T-cell (primary cell): ENCODE measurements at regions of chr3 and their contacts with region 1.

Region 1: DNA sequence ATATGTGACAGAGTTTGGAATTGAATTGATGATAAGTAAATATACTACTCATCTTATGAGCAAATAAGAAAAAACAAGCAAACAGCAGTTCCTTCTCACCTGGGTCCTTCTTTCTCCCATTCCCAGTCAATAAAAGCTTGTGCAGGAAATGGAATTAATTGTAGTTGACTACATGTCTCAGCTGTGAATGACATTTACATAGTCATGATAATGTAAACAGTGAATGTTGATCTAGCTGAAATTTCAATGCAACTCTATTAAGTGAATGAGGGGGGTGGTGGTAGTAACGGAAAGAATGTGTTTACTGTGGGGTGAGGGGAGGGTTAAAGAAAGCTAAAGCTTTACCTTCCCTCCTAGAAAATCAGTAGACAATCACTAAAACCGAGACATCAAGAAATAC is 76.3 kb downstream of the NFKBIZ start:
- DNase-seq: no peak
- ATAC-seq: no peak
- H3K4me3 ChIP-seq: no peak overlapping the region
- H3K4me3 Mint-ChIP-seq: peak overlapping the region in 1 of 3 donors; percentile 26
- H3K27ac ChIP-seq: no peak overlapping the region
- H3K27ac Mint-ChIP-seq: no peak overlapping the region
- H3K4me1 ChIP-seq: peaks cover 0 to 13% of the 10 kb centered on the region in 2 experiments
- H3K4me1 Mint-ChIP-seq: peaks cover 20 to 28% (median 23%) of the 10 kb centered on the region in 3 donors
- H3K27me3 ChIP-seq: no peaks in the 10 kb centered on the region
- H3K27me3 Mint-ChIP-seq: no peaks in the 10 kb centered on the region

Region 2: DNA sequence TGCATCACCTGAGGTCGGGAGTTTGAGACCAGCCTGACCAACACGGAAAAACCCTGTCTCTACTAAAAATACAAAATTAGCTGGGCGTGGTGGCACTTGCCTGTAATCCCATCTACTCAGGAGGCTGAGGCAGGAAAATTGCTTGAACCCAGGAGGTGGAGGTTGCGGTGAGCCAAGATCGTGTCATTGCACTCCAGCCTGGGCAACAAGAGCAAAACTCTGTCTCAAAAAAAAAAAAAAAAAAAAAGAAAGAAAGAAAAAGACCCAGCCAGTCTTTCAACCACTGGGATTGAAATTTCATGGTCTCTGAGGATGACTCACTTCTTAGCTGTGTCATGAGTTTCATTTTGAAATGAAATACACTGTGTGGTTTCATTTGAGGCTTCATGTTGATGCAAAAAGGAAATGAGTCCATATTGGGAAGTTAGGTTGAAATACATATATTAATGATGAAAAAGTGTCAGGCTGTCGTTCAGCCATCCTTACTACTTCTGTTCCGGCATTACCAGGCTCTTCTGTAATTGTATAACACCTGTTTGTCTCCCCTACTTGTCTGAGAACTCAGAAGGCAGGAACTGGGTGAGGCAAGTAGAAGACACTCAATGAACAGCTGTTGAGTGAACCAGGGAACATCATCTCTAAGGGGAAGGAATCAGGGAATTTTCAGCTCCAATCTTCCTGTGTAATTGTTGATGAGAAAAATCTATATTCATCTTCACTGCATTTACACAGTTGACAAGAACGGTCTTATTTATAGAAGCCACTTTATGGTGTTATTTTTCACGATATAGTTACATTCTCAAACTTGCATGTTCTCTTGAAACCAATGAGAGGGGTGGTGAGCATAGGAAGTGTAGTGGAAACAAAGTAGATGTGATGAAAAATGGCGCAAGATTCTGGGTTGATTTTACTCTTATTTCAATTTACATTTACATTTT is 11.1 kb after region 1 on chr3:
- CTCF ChIA-PET with region 1: interaction called, 5 to 14 read pairs
- POLR2A ChIA-PET with region 1: interaction called, 3 to 4 read pairs
- DNase-seq: peak in 10 of 35 experiments; percentile 3 to 73 (median 12)
- ATAC-seq: peak; percentile 92 to 95 (median 94)
- H3K4me3 ChIP-seq: peak overlapping the region in 1 of 2 donors; percentile 16
- H3K4me3 Mint-ChIP-seq: peak overlapping the region; percentile 45 to 69 (median 55)
- H3K27ac ChIP-seq: peak overlapping the region; percentile 40
- H3K27ac Mint-ChIP-seq: peak overlapping the region; percentile 83 to 91
- H3K4me1 ChIP-seq: peaks cover 10 to 37% of the 10 kb centered on the region in 2 experiments
- H3K4me1 Mint-ChIP-seq: peaks cover 27 to 30% (median 29%) of the 10 kb centered on the region in 3 donors
- H3K27me3 ChIP-seq: no peaks in the 10 kb centered on the region
- H3K27me3 Mint-ChIP-seq: no peaks in the 10 kb centered on the region